ENCODE measurements at regions of chr13 and their contacts with region 1.

Region 1: DNA sequence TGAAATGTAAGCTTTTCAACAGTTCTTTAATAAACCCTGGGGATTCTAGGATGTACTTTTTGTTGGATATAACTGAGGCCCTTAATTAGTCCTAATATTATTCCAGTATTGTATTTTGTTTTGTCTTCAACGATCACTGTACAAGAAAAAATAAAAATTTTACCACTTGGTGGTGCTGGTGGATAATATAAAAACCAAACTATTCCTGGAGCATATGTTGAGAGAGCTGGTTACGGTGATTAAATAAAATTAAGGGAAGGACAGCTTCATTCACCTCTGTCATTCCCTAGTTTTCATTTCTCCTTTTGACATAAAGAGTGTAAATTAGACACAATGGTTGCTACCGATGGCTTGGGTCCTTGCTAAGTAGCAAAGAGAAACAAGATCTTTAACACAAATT is 598.6 kb upstream of the PCDH20 start:
- DNase-seq: no peak
- H3K4me3 ChIP-seq: no peak overlapping the region
- H3K27ac ChIP-seq: no peak overlapping the region
- H3K4me1 ChIP-seq: no peaks in the 10 kb centered on the region
- H3K27me3 ChIP-seq: no peaks in the 10 kb centered on the region
- CTCF ChIP-seq: peak; percentile 51; the same call in 1 of the 2 replicates

Region 2: DNA sequence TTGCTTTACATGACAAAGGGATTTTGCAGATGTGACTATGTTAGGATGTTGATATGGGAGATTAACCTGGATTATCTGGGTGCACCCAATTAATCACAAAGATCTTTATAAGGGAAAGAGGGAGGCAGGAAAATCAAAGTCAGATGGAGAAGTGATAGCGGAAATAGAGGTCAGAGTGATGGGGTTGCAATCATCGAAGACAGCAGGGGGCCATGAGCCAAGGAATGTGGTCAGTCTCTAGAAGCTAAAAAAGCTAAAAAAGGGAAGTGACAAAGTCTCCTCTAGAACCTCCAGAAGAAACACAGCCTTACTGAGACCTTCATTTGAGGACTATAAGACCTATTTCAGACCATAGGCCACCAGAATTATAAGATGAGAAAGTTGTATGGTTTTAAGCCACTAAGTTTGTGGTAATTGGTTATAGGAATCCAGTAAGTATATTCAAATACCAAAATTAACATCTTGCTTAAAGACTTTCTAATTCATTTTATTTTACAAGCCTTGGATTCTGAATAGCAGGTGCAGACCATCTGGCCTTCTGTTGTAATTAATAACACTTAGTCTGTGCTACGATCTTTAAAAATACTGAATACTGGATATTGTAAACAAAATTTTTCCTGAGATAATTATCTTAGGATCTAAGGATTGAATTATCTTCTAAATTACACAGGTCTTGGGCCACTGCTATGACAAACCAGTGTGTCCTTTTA is 105.2 kb before region 1 on chr13:
- CTCF ChIA-PET with region 1: no interaction called
- POLR2A ChIA-PET with region 1: no interaction called
- intact Hi-C with region 1: no loop called
- DNase-seq: no peak
- H3K4me3 ChIP-seq: no peak overlapping the region
- H3K27ac ChIP-seq: no peak overlapping the region
- H3K4me1 ChIP-seq: no peaks in the 10 kb centered on the region
- H3K27me3 ChIP-seq: no peaks in the 10 kb centered on the region
- CTCF ChIP-seq: no peak

Region 3: DNA sequence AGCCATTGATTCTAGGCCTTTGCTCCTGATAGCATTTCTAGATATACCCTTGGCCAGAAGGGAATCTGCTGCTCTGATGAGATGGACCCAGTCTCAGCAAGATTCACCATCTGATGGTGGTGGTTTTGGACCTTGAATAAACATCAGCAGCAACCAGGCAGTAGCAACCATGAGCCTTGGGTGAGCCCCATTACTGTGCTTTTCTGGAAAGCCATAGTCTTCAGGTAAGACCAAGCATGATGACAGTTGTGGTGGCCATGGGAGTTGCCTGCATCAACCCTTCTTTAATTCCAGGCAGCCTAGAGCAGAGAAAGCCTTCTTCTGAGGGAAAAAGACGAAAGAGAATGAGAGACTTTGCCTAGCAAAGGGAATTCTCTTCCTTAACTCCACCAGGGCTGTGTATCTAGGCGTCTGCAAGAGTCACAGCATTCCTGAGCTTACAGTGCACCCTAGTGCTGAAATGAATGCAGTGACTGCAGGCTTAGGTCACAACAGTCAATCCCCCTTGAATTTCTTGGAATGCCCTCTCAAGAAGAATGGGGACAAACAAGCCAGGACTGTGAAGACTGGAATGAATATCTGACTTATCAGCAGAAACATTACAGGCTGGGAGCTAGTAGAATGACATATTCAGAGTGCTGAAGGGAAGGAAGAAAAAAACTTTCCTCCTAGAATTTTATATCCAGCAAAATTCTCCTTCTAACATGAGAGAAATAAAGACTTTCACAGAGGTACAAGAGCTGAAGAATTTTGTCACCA is 343.8 kb after region 1 on chr13:
- CTCF ChIA-PET with region 1: interaction called, 3 read pairs
- POLR2A ChIA-PET with region 1: no interaction called
- intact Hi-C with region 1: loop called (anchors 10 kb)
- DNase-seq: peak in 1 of 2 experiments; percentile 33
- H3K4me3 ChIP-seq: no peak overlapping the region
- H3K27ac ChIP-seq: no peak overlapping the region
- H3K4me1 ChIP-seq: no peaks in the 10 kb centered on the region
- H3K27me3 ChIP-seq: no peaks in the 10 kb centered on the region
- CTCF ChIP-seq: peak; percentile 65

Measured in PC-9 (cell line).